ENCODE measurements at regions of chr19 and their contacts with region 1.

Region 1: DNA sequence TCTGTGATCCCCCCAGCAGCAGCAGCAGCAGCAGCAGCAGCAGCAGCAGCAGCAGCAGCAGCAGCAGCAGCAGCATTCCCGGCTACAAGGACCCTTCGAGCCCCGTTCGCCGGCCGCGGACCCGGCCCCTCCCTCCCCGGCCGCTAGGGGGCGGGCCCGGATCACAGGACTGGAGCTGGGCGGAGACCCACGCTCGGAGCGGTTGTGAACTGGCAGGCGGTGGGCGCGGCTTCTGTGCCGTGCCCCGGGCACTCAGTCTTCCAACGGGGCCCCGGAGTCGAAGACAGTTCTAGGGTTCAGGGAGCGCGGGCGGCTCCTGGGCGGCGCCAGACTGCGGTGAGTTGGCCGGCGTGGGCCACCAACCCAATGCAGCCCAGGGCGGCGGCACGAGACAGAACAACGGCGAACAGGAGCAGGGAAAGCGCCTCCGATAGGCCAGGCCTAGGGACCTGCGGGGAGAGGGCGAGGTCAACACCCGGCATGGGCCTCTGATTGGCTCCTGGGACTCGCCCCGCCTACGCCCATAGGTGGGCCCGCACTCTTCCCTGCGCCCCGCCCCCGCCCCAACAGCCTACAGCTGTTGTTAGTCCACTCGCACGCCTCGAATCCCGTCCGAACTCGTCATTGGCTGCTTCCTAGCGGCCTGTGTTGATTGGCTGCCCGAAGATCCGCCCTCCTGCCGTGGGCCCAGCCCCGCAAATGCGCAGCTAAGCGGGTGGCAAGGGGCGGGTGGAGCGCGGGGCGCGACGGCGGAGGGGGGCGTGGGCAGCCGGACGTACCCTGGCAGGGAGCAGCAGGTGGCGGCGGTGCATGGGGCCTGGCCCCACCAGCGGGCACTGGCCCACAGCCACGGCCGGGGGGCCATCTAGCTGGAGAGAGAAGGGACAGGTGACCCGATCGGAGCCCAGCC is 1.4 kb upstream of the SIX5 start:
- DNase-seq: peak; percentile 96 to 99 (median 97)
- ATAC-seq: peak; percentile 76 to 81 (median 78)
- H3K4me3 ChIP-seq: peak overlapping the region; percentile 28 to 93 (median 79)
- H3K27ac ChIP-seq: peak overlapping the region; percentile 86 to 99 (median 97)
- H3K4me1 ChIP-seq: peaks cover 3 to 52% (median 26%) of the 10 kb centered on the region in 12 donors
- H3K27me3 ChIP-seq: peaks cover 0 to 55% (median 0%) of the 10 kb centered on the region in 9 donors
- CTCF ChIP-seq: peak; percentile 94 to 99 (median 96)
- POLR2A ChIP-seq: peak in 1 of 2 donors; percentile 61

Region 2: DNA sequence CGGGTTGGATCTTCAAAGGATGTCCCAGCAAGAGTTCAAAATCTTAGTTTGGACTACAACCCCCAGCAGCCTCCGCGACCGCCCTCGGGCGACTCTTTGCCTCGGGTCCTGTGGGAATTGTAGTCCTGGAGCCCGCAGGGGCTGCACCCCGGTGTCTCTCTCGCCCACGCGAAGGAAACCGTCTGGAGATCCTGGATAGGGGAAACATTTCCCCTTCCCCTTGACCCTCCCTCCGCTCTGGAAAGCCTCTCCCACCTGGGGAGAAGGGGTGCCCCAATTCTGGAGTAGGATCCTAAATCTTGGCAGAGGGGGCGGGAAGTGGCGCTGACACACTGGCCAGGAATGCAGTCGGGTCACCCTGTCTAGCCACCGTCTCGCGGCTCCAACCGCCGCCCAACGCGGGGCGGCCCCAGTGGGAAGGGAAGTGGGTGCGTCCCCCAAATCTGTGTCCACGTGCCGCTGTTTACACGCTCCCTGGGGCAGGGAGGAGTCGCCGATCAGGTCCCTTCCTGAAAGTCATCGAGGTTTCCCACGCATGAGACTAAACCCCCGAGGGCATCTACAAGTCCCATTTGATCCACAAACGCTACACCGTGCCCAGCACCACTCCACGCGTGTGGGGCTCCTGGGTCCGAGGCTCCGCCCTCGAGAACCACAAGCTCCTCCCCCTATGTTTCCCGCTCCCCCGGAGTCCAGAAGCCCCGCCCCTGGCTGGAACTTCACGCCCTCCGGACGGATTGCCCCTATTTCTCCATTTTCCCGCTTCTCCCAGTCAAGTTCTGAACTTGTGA is 364.8 kb before region 1 on chr19:
- intact Hi-C with region 1: loop called in 1 of 10 experiments (anchors 10 kb)
- DNase-seq: peak; percentile 92 to 93 (median 93)
- ATAC-seq: peak; percentile 63 to 79 (median 68)
- H3K4me3 ChIP-seq: peak overlapping the region; percentile 47 to 86 (median 70)
- H3K27ac ChIP-seq: peak overlapping the region; percentile 87 to 97 (median 93)
- H3K4me1 ChIP-seq: peaks cover 0 to 65% (median 38%) of the 10 kb centered on the region in 12 donors
- H3K27me3 ChIP-seq: peaks cover 0 to 19% (median 0%) of the 10 kb centered on the region in 9 donors
- CTCF ChIP-seq: no peak
- POLR2A ChIP-seq: peak in 1 of 2 donors; percentile 23

Region 3: DNA sequence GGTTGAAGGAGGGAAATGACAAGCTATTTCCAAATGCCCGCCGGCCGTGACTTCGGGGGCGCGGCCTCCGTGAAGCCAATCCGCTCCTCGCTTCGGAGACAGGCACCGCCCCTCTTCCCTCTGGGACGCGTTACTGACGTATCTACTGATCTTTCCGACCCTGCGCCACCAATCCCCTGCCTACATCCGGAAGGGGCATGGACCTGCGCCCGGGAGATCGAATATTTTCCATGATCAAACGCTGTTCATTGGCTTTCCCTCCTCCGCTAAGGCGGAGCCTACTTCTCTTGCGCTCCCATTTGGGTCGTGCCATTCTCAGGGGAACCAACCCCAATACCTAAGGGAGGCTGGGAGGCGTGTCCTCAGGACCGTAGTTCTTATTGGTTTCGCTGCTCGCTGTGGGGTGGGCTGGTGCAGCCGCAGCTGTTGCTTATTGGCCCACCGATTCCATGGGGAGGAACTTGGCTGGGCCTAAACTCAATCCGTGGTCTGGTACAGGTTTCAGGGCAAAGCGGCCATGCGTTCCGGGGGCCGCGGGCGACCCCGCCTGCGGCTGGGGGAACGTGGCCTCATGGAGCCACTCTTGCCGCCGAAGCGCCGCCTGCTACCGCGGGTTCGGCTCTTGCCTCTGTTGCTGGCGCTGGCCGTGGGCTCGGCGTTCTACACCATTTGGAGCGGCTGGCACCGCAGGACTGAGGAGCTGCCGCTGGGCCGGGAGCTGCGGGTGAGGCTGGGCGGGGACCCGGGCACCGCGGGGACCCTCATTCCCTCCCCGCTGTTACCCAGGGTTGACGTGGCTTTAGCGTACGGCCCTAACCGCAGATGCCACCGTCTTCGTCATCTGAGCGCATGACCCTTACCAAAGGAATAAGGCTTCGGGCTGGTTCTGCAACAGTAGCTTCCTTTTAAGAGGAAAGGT is 78.0 kb before region 1 on chr19 and contains the start of gene QPCTL:
- intact Hi-C with region 1: loop called in 5 of 10 experiments (anchors 1 to 5 kb)
- DNase-seq: peak; percentile 95 to 98 (median 96)
- ATAC-seq: peak; percentile 94 to 96 (median 96)
- H3K4me3 ChIP-seq: peak within 1 kb of the TSS; percentile 43 to 89 (median 77)
- H3K27ac ChIP-seq: peak within 1 kb of the TSS; percentile 73 to 95 (median 84)
- H3K4me1 ChIP-seq: peaks cover 0 to 22% (median 8%) of the 10 kb centered on the region in 12 donors
- H3K27me3 ChIP-seq: no peaks in the 10 kb centered on the region
- CTCF ChIP-seq: no peak
- POLR2A ChIP-seq: peak in 1 of 2 donors; percentile 74
- total RNA-seq, gene QPCTL: 1.5 to 5.5 (median 2.8) TPM

Region 4: GRCh38 chr19:45717166-45717982 is 53.1 kb before region 1 on chr19:
- intact Hi-C with region 1: loop called in 7 of 10 experiments (anchors 1 to 10 kb)
- DNase-seq: peak; percentile 99 to 100 (median 99)
- ATAC-seq: peak; percentile 97 to 98 (median 98)
- H3K4me3 ChIP-seq: peak overlapping the region; percentile 47 to 77 (median 68)
- H3K27ac ChIP-seq: peak overlapping the region; percentile 78 to 96 (median 94)
- H3K4me1 ChIP-seq: peaks cover 0 to 38% (median 16%) of the 10 kb centered on the region in 12 donors
- H3K27me3 ChIP-seq: no peaks in the 10 kb centered on the region
- CTCF ChIP-seq: peak in 7 of 12 donors; percentile 8 to 38 (median 19)
- POLR2A ChIP-seq: peak in 1 of 2 donors; percentile 43

Region 5: GRCh38 chr19:45730389-45731288 is 39.8 kb before region 1 on chr19 and contains the start of gene FBXO46:
- intact Hi-C with region 1: loop called in 9 of 10 experiments (anchors 1 to 5 kb)
- DNase-seq: peak; percentile 97 to 99 (median 98)
- ATAC-seq: peak; percentile 98 to 99 (median 99)
- H3K4me3 ChIP-seq: peak within 1 kb of the TSS; percentile 66 to 93 (median 80)
- H3K27ac ChIP-seq: peak within 1 kb of the TSS in 11 of 12 donors; percentile 57 to 84 (median 62)
- H3K4me1 ChIP-seq: peaks cover 0 to 22% (median 12%) of the 10 kb centered on the region in 12 donors
- H3K27me3 ChIP-seq: no peaks in the 10 kb centered on the region
- CTCF ChIP-seq: no peak
- POLR2A ChIP-seq: peak in 1 of 2 donors; percentile 73
- total RNA-seq, gene FBXO46: 9.1 to 17.8 (median 10.3) TPM

Region 6: DNA sequence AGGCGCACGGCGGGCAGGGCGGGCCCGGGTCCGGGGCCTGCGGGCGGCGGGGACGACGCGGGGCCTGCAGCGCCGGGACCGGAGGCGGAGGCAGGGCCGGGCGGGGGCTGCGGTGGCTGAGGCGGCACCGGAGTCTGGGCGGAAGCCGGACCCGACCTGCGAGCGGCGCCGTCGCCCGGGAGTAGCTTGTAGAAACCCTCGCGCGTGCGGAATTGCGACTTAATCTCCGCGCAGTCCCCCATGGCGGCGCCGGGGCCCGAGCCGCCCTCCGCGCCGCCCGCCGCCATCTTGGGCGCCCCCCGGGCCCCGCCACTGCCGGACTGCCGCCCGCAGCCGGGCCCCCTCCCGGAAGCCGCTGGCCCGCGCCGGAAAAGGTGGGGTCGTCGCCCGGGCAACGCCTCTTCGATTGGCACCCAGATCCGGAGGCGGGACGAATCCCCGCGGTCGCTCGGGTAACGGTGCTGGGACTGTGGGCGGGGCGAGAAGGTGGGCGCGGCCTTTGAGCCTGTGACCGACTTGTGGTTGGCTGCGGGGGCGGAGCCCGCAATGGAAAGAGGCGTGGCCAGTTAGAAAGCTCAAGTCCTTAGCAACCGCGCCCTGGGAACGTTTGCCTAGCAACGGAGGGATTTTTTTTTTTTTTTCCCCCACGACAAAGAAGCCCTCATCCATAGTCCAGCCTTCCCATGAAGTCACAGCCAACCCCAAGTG is 22.2 kb after region 1 on chr19 and contains the start of gene DMWD:
- intact Hi-C with region 1: loop called in 4 of 10 experiments (anchors 1 to 2 kb)
- DNase-seq: peak; percentile 99 to 100 (median 100)
- ATAC-seq: peak; percentile 96 to 99 (median 97)
- H3K4me3 ChIP-seq: peak within 1 kb of the TSS; percentile 32 to 97 (median 72)
- H3K27ac ChIP-seq: peak within 1 kb of the TSS; percentile 70 to 92 (median 84)
- H3K4me1 ChIP-seq: peaks cover 0 to 41% (median 24%) of the 10 kb centered on the region in 12 donors
- H3K27me3 ChIP-seq: peaks cover 0 to 53% (median 0%) of the 10 kb centered on the region in 9 donors
- CTCF ChIP-seq: no peak
- POLR2A ChIP-seq: peak in 1 of 2 donors; percentile 70
- total RNA-seq, gene DMWD: 47.2 to 109 (median 67.3) TPM

Region 7: GRCh38 chr19:45798995-45799517 is 28.6 kb after region 1 on chr19:
- intact Hi-C with region 1: loop called in 7 of 10 experiments (anchors 1 to 2 kb)
- DNase-seq: peak in 1 of 5 donors; percentile 57
- ATAC-seq: peak; percentile 48 to 86 (median 78)
- H3K4me3 ChIP-seq: no peak overlapping the region
- H3K27ac ChIP-seq: no peak overlapping the region
- H3K4me1 ChIP-seq: peaks cover 0 to 9% (median 6%) of the 10 kb centered on the region in 12 donors
- H3K27me3 ChIP-seq: peaks cover 0 to 69% (median 0%) of the 10 kb centered on the region in 9 donors
- CTCF ChIP-seq: peak; percentile 80 to 93 (median 88)
- POLR2A ChIP-seq: no peak